Heart left ventricle (tissue), 16 donors: ENCODE measurements at regions of chr5 and their contacts with region 1.

Region 1: DNA sequence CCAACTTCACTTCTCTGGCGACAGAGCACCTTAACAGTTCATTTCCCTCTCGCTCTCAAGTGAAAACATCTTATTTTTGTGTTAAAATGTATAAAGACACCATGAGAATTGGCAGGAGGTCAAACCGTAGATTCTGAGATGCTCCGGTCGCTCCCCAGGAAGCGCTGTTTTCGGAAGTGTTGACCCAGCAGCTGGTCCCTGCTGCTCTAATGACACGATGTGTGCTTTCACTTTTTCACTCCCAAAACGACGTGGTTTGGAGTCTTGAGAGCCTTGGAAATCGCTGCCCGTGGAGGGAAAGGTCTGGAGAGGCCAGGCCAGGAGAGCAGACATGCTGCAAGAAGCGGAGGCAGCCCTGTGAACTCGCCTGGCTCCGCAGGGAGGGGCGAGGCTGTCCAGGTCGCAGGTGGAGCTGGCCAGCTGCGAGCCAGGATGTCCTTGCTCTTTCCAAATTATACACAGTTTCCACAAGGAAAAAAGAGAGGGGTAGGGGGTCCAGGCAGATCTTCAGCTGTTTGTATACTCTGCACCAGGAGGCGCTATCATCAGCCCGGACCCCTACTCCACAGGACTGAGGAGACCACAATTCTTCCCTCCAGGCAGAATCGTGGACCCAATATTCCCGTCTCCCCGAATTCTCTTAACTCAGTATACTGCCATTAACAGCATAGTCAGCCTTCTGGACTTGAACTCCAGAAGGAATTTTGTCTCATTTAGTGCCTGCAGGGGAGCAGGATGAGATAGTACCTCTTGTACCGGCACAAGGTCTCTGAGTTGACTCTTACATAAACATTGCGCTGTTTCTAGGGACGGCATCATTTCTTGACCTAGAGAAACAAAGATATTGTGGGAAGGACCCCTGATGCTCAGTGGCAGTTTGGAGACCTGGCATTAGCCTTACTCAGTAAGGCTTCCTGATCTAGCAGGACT is 248.6 kb upstream of the ANKRD55 start:
- DNase-seq: peak; percentile 73 to 80 (median 76)
- ATAC-seq: peak; percentile 32 to 75 (median 62)
- H3K4me3 ChIP-seq: peak overlapping the region; percentile 51 to 79 (median 68)
- H3K27ac ChIP-seq: peak overlapping the region; percentile 88 to 98 (median 94)
- H3K4me1 ChIP-seq: peaks cover 4 to 45% (median 22%) of the 10 kb centered on the region in 12 donors
- H3K27me3 ChIP-seq: no peaks in the 10 kb centered on the region
- CTCF ChIP-seq: peak in 8 of 12 donors; percentile 14 to 52 (median 30)
- POLR2A ChIP-seq: no peak

Region 2: DNA sequence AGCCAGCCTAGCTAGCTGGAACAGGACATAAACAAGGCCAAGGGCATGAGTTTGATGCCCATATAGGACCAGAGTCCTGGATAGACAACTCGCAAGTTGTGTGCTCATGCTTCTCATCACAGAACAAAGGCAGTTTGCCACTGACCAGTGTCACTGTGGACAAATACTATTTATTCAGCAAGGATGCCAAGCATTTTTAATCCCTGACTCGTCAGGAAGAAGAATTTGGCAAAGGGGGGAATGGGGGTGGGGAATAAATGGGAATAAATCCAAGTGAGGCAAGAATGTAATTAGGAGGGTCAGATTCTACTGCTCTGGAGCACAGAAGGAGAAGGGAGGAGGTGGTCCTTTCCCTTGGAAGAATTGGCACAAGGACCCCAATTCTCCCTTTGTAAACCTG is 201.7 kb before region 1 on chr5:
- intact Hi-C with region 1: loop called in 3 of 10 experiments (anchors 10 kb)
- DNase-seq: no peak
- ATAC-seq: peak in 2 of 4 donors; percentile 51 to 66
- H3K4me3 ChIP-seq: no peak overlapping the region
- H3K27ac ChIP-seq: peak overlapping the region in 2 of 12 donors; percentile 3 to 19
- H3K4me1 ChIP-seq: peaks cover 0 to 28% (median 12%) of the 10 kb centered on the region in 12 donors
- H3K27me3 ChIP-seq: no peaks in the 10 kb centered on the region
- CTCF ChIP-seq: no peak
- POLR2A ChIP-seq: no peak

Region 3: DNA sequence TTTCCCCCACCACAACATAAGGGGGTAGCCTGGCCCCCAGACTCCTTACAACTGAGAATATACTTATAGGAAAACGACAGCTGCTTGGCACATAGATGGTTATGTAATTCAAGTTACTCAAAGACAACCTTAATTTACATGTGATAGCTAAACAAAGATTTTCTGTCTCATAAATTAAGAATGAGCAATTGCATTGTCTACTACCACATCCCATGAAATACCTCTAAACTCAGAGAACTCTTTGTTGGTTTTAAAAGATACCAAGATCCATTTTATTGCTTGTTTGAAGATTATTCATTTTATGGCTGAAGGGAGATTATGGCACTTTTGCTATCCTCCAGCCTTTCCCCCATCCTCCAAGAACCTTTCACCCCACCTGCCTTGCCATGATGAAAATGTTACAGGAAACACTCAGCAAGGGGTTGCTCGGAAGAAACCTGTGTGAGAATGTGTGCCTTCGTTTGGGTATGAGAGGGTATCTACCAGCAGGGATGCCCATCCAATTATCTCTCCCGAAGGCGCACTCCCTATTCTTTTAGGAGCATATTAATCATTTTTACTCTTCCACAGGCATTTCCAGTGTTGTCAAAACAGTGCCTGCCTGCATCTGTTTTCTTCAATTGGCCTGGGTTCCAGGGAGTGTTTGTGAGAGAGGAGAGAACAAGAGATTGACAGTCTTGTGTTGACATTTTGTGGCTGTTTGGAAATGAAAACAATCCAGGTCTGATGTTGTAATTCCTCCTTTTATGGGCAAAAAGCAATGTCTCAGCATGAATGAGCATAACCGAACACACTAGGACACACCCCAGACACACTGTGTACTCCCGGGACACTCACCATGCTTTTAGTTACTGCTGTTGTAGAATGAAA is 40.6 kb before region 1 on chr5:
- intact Hi-C with region 1: no loop called
- DNase-seq: no peak
- ATAC-seq: peak; percentile 55 to 91 (median 76)
- H3K4me3 ChIP-seq: no peak overlapping the region
- H3K27ac ChIP-seq: no peak overlapping the region
- H3K4me1 ChIP-seq: peaks cover 0 to 9% (median 0%) of the 10 kb centered on the region in 12 donors
- H3K27me3 ChIP-seq: no peaks in the 10 kb centered on the region
- CTCF ChIP-seq: no peak
- POLR2A ChIP-seq: no peak

Region 4: DNA sequence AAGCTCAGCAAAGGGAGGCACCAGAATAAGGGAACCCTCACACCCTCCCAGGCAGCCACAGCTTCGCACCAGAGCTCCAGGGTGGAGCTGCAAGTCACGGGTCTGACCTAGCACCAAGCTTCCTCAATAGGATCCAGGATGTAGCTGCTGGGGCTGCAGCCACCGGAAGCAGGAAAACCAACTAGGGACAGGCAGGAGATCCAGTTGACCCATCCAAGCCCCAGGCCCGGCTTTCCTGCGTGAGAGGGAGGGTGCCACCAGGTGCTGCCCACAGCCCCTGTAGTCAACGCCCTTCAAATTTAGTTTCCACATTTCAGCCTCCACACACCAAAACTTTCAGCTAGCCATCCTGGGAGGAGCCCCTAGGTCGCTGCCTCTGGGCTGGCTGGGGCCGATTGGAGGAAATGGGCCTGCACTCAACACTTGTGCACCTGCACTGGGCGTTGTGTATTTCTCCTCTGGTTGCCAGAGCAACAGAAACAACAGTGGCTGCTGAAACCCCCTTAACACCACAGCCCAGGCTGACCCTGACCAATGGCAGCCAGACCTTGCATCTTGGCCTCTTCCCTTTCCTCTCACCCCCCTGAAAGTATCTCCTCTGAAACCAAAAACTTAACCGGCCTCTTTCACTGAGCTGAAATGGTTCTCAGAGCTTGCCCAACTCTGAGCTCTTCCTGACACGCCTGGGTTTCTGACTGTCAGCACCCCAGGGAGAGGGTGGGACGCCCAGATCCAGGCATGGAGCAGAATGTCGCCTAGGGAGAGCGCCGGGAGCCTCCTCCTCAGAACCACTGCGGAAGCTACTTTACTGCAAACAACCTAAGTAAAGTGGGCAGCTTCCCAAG is 107.2 kb after region 1 on chr5:
- intact Hi-C with region 1: loop called in 3 of 10 experiments (anchors 5 kb)
- DNase-seq: peak; percentile 61 to 86 (median 72)
- ATAC-seq: peak; percentile 23 to 71 (median 64)
- H3K4me3 ChIP-seq: no peak overlapping the region
- H3K27ac ChIP-seq: peak overlapping the region; percentile 1 to 84 (median 61)
- H3K4me1 ChIP-seq: peaks cover 4 to 52% (median 39%) of the 10 kb centered on the region in 12 donors
- H3K27me3 ChIP-seq: no peaks in the 10 kb centered on the region
- CTCF ChIP-seq: no peak
- POLR2A ChIP-seq: no peak

Region 5: GRCh38 chr5:56838409-56839039 is 356.8 kb after region 1 on chr5:
- intact Hi-C with region 1: loop called in 3 of 10 experiments (anchors 10 kb)
- DNase-seq: no peak
- ATAC-seq: peak; percentile 30 to 74 (median 67)
- H3K4me3 ChIP-seq: peak overlapping the region in 3 of 12 donors; percentile 18 to 19 (median 19)
- H3K27ac ChIP-seq: peak overlapping the region in 10 of 12 donors; percentile 9 to 63 (median 32)
- H3K4me1 ChIP-seq: peaks cover 0 to 86% (median 49%) of the 10 kb centered on the region in 12 donors
- H3K27me3 ChIP-seq: no peaks in the 10 kb centered on the region
- CTCF ChIP-seq: peak; percentile 35 to 75 (median 61)
- POLR2A ChIP-seq: no peak